Activated CD8-positive, alpha-beta T cell treated with anti-CD3 and anti-CD28 coated beads for 36 hours (primary cell): ENCODE measurements at regions of chr2 and their contacts with region 1.

Region 1: GRCh38 chr2:69724540-69725159 is 17.3 kb upstream of the ANXA4 start:
- DNase-seq: peak; percentile 92
- ATAC-seq: peak; percentile 91
- H3K4me3 Mint-ChIP-seq: peak overlapping the region; percentile 64
- H3K27ac Mint-ChIP-seq: no peak overlapping the region
- H3K4me1 Mint-ChIP-seq: peaks cover 6% of the 10 kb centered on the region
- H3K27me3 Mint-ChIP-seq: no peaks in the 10 kb centered on the region
- CTCF ChIP-seq: peak; percentile 97

Region 2: GRCh38 chr2:69514406-69514805 is 210.2 kb before region 1 on chr2:
- CTCF ChIA-PET with region 1: interaction called, 10 read pairs
- POLR2A ChIA-PET with region 1: no interaction called
- intact Hi-C with region 1: no loop called
- DNase-seq: no peak
- ATAC-seq: no peak
- H3K4me3 Mint-ChIP-seq: no peak overlapping the region
- H3K27ac Mint-ChIP-seq: no peak overlapping the region
- H3K4me1 Mint-ChIP-seq: no peaks in the 10 kb centered on the region
- H3K27me3 Mint-ChIP-seq: no peaks in the 10 kb centered on the region
- CTCF ChIP-seq: no peak

Region 3: GRCh38 chr2:69604026-69604678 is 120.5 kb before region 1 on chr2:
- CTCF ChIA-PET with region 1: no interaction called
- POLR2A ChIA-PET with region 1: no interaction called
- intact Hi-C with region 1: no loop called
- DNase-seq: no peak
- ATAC-seq: no peak
- H3K4me3 Mint-ChIP-seq: no peak overlapping the region
- H3K27ac Mint-ChIP-seq: peak overlapping the region; percentile 22
- H3K4me1 Mint-ChIP-seq: peaks cover 91% of the 10 kb centered on the region
- H3K27me3 Mint-ChIP-seq: no peaks in the 10 kb centered on the region
- CTCF ChIP-seq: no peak

Region 4: GRCh38 chr2:69643602-69644505 is 80.8 kb before region 1 on chr2 and contains the start of gene AAK1:
- CTCF ChIA-PET with region 1: interaction called, 10 read pairs
- POLR2A ChIA-PET with region 1: no interaction called
- intact Hi-C with region 1: no loop called
- DNase-seq: peak; percentile 91
- ATAC-seq: peak; percentile 58
- H3K4me3 Mint-ChIP-seq: peak within 1 kb of the TSS; percentile 85
- H3K27ac Mint-ChIP-seq: peak within 1 kb of the TSS; percentile 96
- H3K4me1 Mint-ChIP-seq: peaks cover 50% of the 10 kb centered on the region
- H3K27me3 Mint-ChIP-seq: no peaks in the 10 kb centered on the region
- CTCF ChIP-seq: no peak
- total RNA-seq, gene AAK1: 114 to 115 TPM

Region 5: GRCh38 chr2:69755862-69756467 is 31.3 kb after region 1 on chr2:
- CTCF ChIA-PET with region 1: interaction called, 31 read pairs
- POLR2A ChIA-PET with region 1: no interaction called
- intact Hi-C with region 1: no loop called
- DNase-seq: no peak
- ATAC-seq: peak; percentile 75
- H3K4me3 Mint-ChIP-seq: no peak overlapping the region
- H3K27ac Mint-ChIP-seq: no peak overlapping the region
- H3K4me1 Mint-ChIP-seq: peaks cover 7% of the 10 kb centered on the region
- H3K27me3 Mint-ChIP-seq: no peaks in the 10 kb centered on the region
- CTCF ChIP-seq: no peak

Region 6: DNA sequence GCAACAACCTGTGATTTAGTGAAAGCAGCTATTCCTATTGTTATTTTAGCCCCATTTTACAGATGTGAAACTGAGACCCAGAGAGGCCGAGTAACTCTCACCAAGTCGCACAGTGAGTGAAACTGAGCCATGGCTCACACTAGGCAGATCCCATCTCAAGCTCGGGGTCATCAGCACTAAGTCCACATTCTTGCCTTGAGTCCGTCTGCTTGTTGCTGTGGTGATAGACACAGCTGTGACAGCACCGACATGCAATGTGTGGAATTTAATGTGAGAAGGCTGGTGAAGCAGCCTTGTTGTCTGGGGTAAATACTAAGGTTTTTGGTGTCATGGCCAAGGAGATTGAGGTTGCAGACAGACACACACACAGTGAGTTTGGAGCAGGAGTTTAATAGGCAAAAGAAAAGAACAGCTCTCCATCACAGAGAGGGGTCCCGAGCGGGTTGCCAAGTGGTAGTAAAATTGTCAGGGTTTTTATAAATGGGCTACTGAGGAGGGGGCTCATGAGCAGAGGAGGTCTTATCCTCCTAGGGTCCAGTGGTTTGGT is 64.6 kb after region 1 on chr2:
- CTCF ChIA-PET with region 1: interaction called, 13 read pairs
- POLR2A ChIA-PET with region 1: no interaction called
- intact Hi-C with region 1: no loop called
- DNase-seq: no peak
- ATAC-seq: no peak
- H3K4me3 Mint-ChIP-seq: no peak overlapping the region
- H3K27ac Mint-ChIP-seq: no peak overlapping the region
- H3K4me1 Mint-ChIP-seq: peaks cover 15% of the 10 kb centered on the region
- H3K27me3 Mint-ChIP-seq: no peaks in the 10 kb centered on the region
- CTCF ChIP-seq: no peak

Region 7: GRCh38 chr2:69816923-69817542 is 92.4 kb after region 1 on chr2:
- CTCF ChIA-PET with region 1: interaction called, 382 read pairs
- POLR2A ChIA-PET with region 1: interaction called, 12 read pairs
- intact Hi-C with region 1: loop called (anchors 1 kb)
- DNase-seq: peak; percentile 88
- ATAC-seq: peak; percentile 89
- H3K4me3 Mint-ChIP-seq: no peak overlapping the region
- H3K27ac Mint-ChIP-seq: no peak overlapping the region
- H3K4me1 Mint-ChIP-seq: peaks cover 4% of the 10 kb centered on the region
- H3K27me3 Mint-ChIP-seq: no peaks in the 10 kb centered on the region
- CTCF ChIP-seq: peak; percentile 94

Region 8: GRCh38 chr2:69948032-69948962 is 223.6 kb after region 1 on chr2:
- CTCF ChIA-PET with region 1: no interaction called
- POLR2A ChIA-PET with region 1: no interaction called
- intact Hi-C with region 1: no loop called
- DNase-seq: no peak
- ATAC-seq: no peak
- H3K4me3 Mint-ChIP-seq: no peak overlapping the region
- H3K27ac Mint-ChIP-seq: no peak overlapping the region
- H3K4me1 Mint-ChIP-seq: peaks cover 37% of the 10 kb centered on the region
- H3K27me3 Mint-ChIP-seq: no peaks in the 10 kb centered on the region
- CTCF ChIP-seq: no peak